ENCODE measurements at regions of chr2 and their contacts with region 1.

Region 1: DNA sequence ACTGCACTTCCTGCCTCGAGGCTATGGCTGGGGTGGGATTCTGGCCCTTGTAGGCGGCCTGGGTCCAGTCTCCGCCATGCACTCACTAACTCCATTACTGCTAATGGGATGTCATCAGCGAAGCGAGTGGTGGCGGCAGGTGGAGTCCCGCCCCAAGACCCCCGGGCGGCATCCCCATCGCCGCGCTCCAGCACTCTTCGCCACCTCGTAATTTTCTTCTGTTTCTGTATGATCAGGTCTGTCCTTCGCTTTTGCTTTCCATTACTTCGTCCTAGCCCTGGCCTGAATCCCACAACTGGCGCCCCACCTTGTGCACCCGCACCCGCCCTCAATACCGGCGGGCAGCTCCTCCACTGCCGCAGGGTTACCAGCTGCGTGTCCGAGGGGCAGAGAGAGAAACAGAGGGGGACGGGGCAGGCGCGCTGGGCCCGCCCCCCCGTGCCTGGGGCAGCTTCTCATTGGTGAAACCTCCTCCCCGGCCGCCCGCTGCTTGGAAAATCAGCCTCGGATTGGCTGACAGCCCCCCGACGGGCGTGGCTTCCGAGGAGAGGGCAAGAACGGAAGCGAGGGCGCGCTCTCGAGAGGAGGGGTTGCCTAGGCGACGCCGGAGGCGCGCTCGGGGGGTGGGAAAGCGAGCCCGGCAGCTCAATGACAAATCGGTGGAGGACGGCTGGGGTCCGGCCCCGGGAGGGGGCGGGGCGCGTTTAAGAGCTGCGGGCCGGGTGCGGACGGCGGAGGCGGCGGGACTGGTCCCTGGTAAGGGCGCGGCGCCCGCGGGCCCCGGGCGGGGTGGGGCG is at the start of gene RALB:
- DNase-seq: peak; percentile 95 to 99 (median 97)
- ATAC-seq: peak; percentile 95
- H3K4me3 ChIP-seq: peak within 1 kb of the TSS; percentile 81
- H3K4me3 Mint-ChIP-seq: peak within 1 kb of the TSS; percentile 94 to 100 (median 98)
- H3K27ac ChIP-seq: peak within 1 kb of the TSS; percentile 76
- H3K27ac Mint-ChIP-seq: peak within 1 kb of the TSS; percentile 87 to 98 (median 95)
- H3K4me1 ChIP-seq: peaks cover 16% of the 10 kb centered on the region in 2 donors
- H3K4me1 Mint-ChIP-seq: peaks cover 29 to 72% (median 51%) of the 10 kb centered on the region in 7 donors
- H3K27me3 ChIP-seq: no peaks in the 10 kb centered on the region
- H3K27me3 Mint-ChIP-seq: peaks cover 0 to 9% (median 4%) of the 10 kb centered on the region in 5 donors
- total RNA-seq, gene RALB: 8.7 to 119 (median 11.6) TPM

Region 2: DNA sequence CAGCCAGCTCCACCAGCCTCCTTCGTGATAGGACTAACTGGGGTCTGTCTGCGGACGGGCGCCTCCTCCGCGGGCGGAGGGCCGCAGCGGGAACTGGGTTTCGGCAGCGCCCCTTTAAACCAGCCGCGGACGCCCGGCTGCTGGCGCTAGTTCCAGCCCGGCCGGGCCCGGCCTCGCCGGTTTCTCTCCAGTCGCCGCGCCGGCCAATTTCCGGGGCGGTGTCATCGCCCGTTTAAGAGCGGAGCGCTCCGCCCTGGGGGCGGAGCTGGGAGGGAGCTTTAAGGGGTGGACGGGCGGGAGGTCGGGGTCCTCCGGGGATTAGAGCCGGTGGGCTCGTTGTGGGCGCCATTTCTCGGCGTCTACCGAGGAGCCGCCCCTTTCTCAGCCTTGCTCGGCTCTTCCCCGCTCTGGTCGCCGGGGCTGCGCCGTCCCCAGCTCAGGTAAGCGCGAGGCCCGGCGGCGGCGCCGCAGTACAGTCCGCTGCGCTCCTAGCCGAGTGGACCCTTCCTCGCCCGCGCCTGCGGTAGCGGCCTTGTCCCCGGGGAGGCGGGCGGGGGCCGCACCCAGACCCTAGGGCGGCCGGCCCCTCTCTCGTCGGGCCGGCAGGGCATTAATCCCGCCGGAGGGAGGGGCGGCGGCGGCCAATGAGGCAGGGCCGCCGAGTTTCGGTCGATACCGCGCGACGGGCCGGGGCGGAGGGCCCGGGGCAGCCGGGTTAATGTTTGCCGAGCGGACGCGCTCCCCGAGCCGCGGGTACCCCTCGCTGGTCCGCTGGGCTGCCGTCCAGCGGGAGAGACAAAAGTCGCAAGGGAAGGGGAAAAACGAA is 239.4 kb before region 1 on chr2 and contains the start of gene EPB41L5:
- CTCF ChIA-PET with region 1: no interaction called
- POLR2A ChIA-PET with region 1: interaction called, 3 read pairs
- intact Hi-C with region 1: loop called in 1 of 2 experiments (anchors 2 kb)
- DNase-seq: peak; percentile 56 to 81 (median 67)
- ATAC-seq: peak; percentile 93
- H3K4me3 ChIP-seq: peak within 1 kb of the TSS; percentile 69
- H3K4me3 Mint-ChIP-seq: peak within 1 kb of the TSS; percentile 73 to 89 (median 86)
- H3K27ac ChIP-seq: peak within 1 kb of the TSS; percentile 70
- H3K27ac Mint-ChIP-seq: peak within 1 kb of the TSS in 8 of 9 donors; percentile 36 to 75 (median 70)
- H3K4me1 ChIP-seq: peaks cover 6% of the 10 kb centered on the region in 2 donors
- H3K4me1 Mint-ChIP-seq: peaks cover 8 to 37% (median 24%) of the 10 kb centered on the region in 7 donors
- H3K27me3 ChIP-seq: no peaks in the 10 kb centered on the region
- H3K27me3 Mint-ChIP-seq: peaks cover 0 to 20% (median 0%) of the 10 kb centered on the region in 5 donors
- total RNA-seq, gene EPB41L5: 2.2 to 9.3 (median 6.8) TPM

Region 3: DNA sequence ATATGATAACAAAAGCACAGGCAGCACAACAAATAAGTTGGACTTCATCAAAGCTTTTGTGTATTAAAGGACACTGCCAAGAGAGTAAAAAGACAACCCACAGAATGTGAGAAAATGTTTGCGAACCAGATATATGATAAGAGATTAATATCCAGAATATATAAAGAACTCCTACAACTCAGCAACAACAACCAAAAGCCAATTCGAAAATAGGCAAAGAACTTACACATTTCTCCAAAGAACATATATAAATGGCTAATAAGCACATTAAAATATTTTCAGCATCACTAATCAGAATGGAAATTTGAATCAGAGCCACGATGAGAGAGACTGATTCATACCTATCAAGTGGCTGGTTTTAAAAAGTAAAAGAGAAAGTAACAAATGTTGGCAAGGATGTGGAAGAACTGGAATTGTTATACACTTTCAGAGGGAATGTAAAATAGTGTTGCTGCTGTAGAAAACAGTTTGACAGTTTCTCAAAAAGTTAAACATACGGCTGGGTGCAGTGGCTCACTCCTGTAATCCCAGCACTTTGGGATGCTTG is 214.4 kb before region 1 on chr2:
- CTCF ChIA-PET with region 1: no interaction called
- POLR2A ChIA-PET with region 1: no interaction called
- intact Hi-C with region 1: no loop called
- DNase-seq: no peak
- ATAC-seq: no peak
- H3K4me3 ChIP-seq: no peak overlapping the region
- H3K4me3 Mint-ChIP-seq: no peak overlapping the region
- H3K27ac ChIP-seq: no peak overlapping the region
- H3K27ac Mint-ChIP-seq: peak overlapping the region in 1 of 9 donors; percentile 53
- H3K4me1 ChIP-seq: no peaks in the 10 kb centered on the region
- H3K4me1 Mint-ChIP-seq: peaks cover 0 to 8% (median 0%) of the 10 kb centered on the region in 7 donors
- H3K27me3 ChIP-seq: no peaks in the 10 kb centered on the region
- H3K27me3 Mint-ChIP-seq: peaks cover 0 to 14% (median 0%) of the 10 kb centered on the region in 5 donors

Region 4: DNA sequence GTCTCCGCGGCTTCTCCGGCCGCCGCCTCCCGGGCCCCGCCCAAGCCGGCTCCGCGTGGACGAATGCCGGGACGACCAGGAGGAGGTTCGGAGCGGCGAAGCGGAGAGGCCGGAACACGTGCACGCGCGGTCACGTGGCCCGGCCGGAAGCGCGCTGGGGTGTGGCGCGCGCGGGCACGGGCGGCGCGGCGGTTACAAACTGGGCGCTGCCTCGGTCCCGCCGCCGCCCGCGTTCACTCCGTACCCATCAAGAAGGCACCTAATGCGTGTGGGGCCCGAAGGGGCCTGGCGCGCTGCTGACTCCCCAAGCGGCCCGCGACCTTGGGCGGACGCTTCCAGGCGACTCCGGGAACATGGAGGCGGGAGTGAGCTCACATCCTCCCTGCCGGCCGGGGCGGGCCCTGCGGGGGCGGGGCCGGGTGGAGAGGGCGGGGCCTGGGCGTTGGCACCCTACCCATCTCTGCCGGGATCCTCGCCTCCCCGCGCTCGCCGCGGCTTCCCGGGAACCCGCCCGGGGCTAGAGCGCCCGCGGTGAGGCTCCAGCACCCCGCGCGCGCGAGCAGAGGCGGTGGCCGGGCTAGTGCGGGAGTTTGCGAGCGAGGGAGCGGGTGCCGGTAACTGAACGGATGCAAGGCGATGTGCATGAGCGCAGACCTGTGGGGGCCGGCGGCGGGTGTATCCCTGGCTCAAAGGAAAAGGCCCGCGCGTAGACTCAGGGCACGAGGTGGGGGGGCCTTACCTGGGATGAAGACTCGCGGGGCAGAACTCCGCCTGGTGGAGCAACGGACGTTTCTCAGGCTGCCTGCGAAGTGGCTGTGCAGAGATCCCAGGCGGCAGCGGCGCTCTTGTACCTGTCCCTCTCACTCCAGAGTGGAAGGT is 29.1 kb before region 1 on chr2 and contains the start of gene TMEM185B:
- CTCF ChIA-PET with region 1: interaction called, 3 read pairs
- POLR2A ChIA-PET with region 1: interaction called, 7 read pairs
- intact Hi-C with region 1: loop called (anchors 1 kb)
- DNase-seq: peak; percentile 83 to 96 (median 90)
- ATAC-seq: peak; percentile 97
- H3K4me3 ChIP-seq: peak within 1 kb of the TSS; percentile 74
- H3K4me3 Mint-ChIP-seq: peak within 1 kb of the TSS; percentile 83 to 91 (median 88)
- H3K27ac ChIP-seq: peak within 1 kb of the TSS; percentile 94
- H3K27ac Mint-ChIP-seq: peak within 1 kb of the TSS; percentile 85 to 92 (median 91)
- H3K4me1 ChIP-seq: peaks cover 20 to 23% of the 10 kb centered on the region in 2 donors
- H3K4me1 Mint-ChIP-seq: peaks cover 34 to 67% (median 56%) of the 10 kb centered on the region in 7 donors
- H3K27me3 ChIP-seq: no peaks in the 10 kb centered on the region
- H3K27me3 Mint-ChIP-seq: no peaks in the 10 kb centered on the region
- total RNA-seq, gene TMEM185B: 14.9 to 36.8 (median 19.5) TPM

Region 5: GRCh38 chr2:120287183-120288015 is 35.0 kb after region 1 on chr2:
- CTCF ChIA-PET with region 1: no interaction called
- POLR2A ChIA-PET with region 1: interaction called, 3 read pairs
- intact Hi-C with region 1: loop called (anchors 1 to 5 kb)
- DNase-seq: peak in 1 of 9 donors; percentile 34
- ATAC-seq: peak; percentile 63
- H3K4me3 ChIP-seq: no peak overlapping the region
- H3K4me3 Mint-ChIP-seq: peak overlapping the region in 3 of 10 donors; percentile 18 to 86 (median 30)
- H3K27ac ChIP-seq: no peak overlapping the region
- H3K27ac Mint-ChIP-seq: peak overlapping the region in 6 of 9 donors; percentile 28 to 91 (median 64)
- H3K4me1 ChIP-seq: peaks cover 0 to 11% of the 10 kb centered on the region in 2 donors
- H3K4me1 Mint-ChIP-seq: peaks cover 13 to 76% (median 26%) of the 10 kb centered on the region in 7 donors
- H3K27me3 ChIP-seq: no peaks in the 10 kb centered on the region
- H3K27me3 Mint-ChIP-seq: no peaks in the 10 kb centered on the region

Region 6: GRCh38 chr2:121736462-121737341 is 1484.3 kb after region 1 on chr2 and contains the start of gene NIFK:
- CTCF ChIA-PET with region 1: no interaction called
- POLR2A ChIA-PET with region 1: no interaction called
- intact Hi-C with region 1: loop called in 1 of 2 experiments (anchors 5 kb)
- DNase-seq: peak; percentile 98 to 100 (median 99)
- ATAC-seq: peak; percentile 96
- H3K4me3 ChIP-seq: peak within 1 kb of the TSS; percentile 80
- H3K4me3 Mint-ChIP-seq: peak within 1 kb of the TSS; percentile 81 to 99 (median 95)
- H3K27ac ChIP-seq: peak within 1 kb of the TSS; percentile 89
- H3K27ac Mint-ChIP-seq: peak within 1 kb of the TSS; percentile 85 to 99 (median 97)
- H3K4me1 ChIP-seq: peaks cover 13 to 19% of the 10 kb centered on the region in 2 donors
- H3K4me1 Mint-ChIP-seq: peaks cover 17 to 54% (median 38%) of the 10 kb centered on the region in 7 donors
- H3K27me3 ChIP-seq: no peaks in the 10 kb centered on the region
- H3K27me3 Mint-ChIP-seq: no peaks in the 10 kb centered on the region
- total RNA-seq, gene NIFK: 35.3 to 88.1 (median 71.9) TPM

Measured in naive thymus-derived CD4-positive, alpha-beta T cell (primary cell).